ENCODE measurements at regions of chr1 and their contacts with region 1.

Region 1: GRCh38 chr1:150149271-150150132 is at the start of gene PLEKHO1:
- DNase-seq: peak; percentile 89
- ATAC-seq: peak; percentile 74
- H3K4me3 Mint-ChIP-seq: peak within 1 kb of the TSS; percentile 82
- H3K27ac Mint-ChIP-seq: peak within 1 kb of the TSS; percentile 86
- H3K4me1 Mint-ChIP-seq: peaks cover 51% of the 10 kb centered on the region
- H3K27me3 Mint-ChIP-seq: peaks cover 1% of the 10 kb centered on the region
- total RNA-seq, gene PLEKHO1: 13.2 TPM

Region 2: DNA sequence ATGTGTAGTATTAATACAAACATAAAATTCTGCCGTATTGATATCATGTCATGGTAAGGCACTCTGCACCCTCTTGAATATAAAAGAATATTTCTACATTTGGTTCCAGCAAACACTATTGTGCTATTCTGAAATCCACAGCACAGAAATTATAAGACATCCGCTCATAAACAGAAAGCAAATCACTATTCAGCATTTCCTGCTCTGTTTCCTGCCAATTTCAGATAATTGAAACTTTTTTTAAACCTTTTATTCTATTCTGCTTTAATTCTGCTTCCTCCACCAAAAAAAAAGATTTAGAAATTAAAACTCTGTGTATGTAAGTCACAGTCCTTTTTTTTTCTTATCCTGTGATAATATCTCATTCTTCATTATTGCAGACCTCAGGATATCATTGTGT is 39.4 kb before region 1 on chr1:
- CTCF ChIA-PET with region 1: no interaction called
- POLR2A ChIA-PET with region 1: no interaction called
- intact Hi-C with region 1: loop called in 1 of 2 experiments (anchors 5 kb)
- DNase-seq: no peak
- ATAC-seq: no peak
- H3K4me3 Mint-ChIP-seq: peak overlapping the region; percentile 55
- H3K27ac Mint-ChIP-seq: peak overlapping the region; percentile 90
- H3K4me1 Mint-ChIP-seq: peaks cover 65% of the 10 kb centered on the region
- H3K27me3 Mint-ChIP-seq: no peaks in the 10 kb centered on the region

Region 3: DNA sequence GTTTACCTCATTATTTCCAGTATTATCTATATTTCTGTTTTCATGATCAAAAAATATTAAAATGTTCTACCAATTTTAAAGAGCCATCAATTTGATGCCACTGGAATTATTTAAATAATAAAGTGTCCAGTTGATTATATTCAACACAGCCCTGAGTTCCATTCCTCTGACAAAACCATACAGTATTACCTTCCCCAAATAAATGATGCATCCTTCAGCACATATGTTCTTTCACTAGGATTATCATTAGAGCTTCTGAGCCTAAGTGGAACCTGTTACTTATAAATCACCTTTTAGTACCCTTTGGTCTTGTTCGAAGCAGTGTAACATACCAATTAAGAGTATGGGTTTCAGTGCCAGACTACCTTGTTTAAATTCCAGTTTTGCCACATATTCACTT is 17.1 kb before region 1 on chr1:
- CTCF ChIA-PET with region 1: no interaction called
- POLR2A ChIA-PET with region 1: no interaction called
- intact Hi-C with region 1: no loop called
- DNase-seq: no peak
- ATAC-seq: no peak
- H3K4me3 Mint-ChIP-seq: no peak overlapping the region
- H3K27ac Mint-ChIP-seq: no peak overlapping the region
- H3K4me1 Mint-ChIP-seq: peaks cover 7% of the 10 kb centered on the region
- H3K27me3 Mint-ChIP-seq: no peaks in the 10 kb centered on the region

Region 4: DNA sequence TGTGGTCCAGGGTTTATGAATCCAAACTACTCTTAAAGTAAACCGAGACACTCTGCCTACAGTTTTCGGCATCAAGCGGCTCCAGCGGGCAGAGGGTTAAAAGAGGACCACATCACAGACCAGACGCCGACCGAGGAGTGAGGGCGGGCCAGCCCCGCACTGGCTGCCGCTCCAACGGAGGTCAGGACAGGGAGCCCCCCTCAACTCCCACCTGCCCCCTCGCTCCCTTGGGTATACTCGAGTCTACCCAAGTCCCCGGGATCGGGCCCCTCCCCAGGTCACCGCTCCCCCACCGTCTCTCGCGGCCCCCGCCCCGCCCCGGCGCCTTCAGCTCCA is 726.6 kb after region 1 on chr1:
- CTCF ChIA-PET with region 1: no interaction called
- POLR2A ChIA-PET with region 1: no interaction called
- intact Hi-C with region 1: no loop called
- DNase-seq: no peak
- ATAC-seq: peak; percentile 37
- H3K4me3 Mint-ChIP-seq: peak overlapping the region; percentile 88
- H3K27ac Mint-ChIP-seq: peak overlapping the region; percentile 95
- H3K4me1 Mint-ChIP-seq: peaks cover 25% of the 10 kb centered on the region
- H3K27me3 Mint-ChIP-seq: no peaks in the 10 kb centered on the region

Measured in activated CD4-positive, alpha-beta T cell treated with anti-CD3 and anti-CD28 coated beads for 36 hours (primary cell).